Calu3 (cell line): ENCODE measurements at regions of chr2 and their contacts with region 1.

Region 1: DNA sequence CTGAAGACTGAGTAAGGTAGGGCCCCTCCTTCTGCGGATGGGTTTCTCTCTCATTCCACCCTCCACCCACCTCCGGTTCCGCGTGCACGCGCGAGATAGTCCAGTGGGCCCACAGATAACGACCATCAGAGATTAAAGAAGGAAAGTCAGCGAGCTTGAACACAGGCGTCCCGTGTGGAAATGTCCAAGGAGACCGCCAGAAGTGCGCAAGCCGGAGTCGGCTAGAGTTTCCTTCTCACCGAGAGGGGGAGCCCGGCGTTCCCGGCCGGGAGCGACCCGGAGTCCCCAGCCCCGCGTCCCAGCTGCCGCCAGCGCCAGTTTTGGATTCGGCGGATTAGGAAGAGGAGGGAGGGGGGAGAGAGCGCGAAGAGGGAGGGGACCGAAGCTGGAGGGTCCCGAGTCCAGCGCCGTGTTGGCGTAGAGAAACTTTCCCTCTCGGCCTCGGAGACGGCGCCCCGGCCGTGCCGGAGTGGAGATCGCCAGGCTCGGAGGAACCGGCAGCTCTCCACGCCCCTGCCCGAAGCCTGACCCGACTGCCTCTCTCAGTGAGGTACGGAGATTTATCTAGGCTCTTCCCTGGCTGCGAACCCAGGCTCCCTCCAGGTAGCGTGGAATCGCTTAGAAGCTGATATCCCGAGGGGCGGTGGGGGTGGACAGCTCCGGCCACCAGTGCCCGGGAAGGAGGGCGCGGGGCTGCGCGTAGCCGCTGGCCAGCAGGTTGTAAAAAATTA is at the start of gene GULP1:
- DNase-seq: peak; percentile 82
- H3K4me3 Mint-ChIP-seq: peak within 1 kb of the TSS; percentile 95
- H3K27ac Mint-ChIP-seq: peak within 1 kb of the TSS; percentile 96
- H3K4me1 Mint-ChIP-seq: peaks cover 15% of the 10 kb centered on the region
- H3K27me3 Mint-ChIP-seq: no peaks in the 10 kb centered on the region
- CTCF ChIP-seq: peak; percentile 73
- total RNA-seq, gene GULP1: 86.8 and 94.4 TPM in 2 replicates

Region 2: GRCh38 chr2:187554011-187554703 is 737.6 kb before region 1 on chr2 and contains the start of gene TFPI:
- CTCF ChIA-PET with region 1: no interaction called
- intact Hi-C with region 1: loop called (anchors 5 kb)
- DNase-seq: peak; percentile 21
- H3K4me3 Mint-ChIP-seq: peak within 1 kb of the TSS; percentile 82
- H3K27ac Mint-ChIP-seq: peak within 1 kb of the TSS; percentile 92
- H3K4me1 Mint-ChIP-seq: peaks cover 31% of the 10 kb centered on the region
- H3K27me3 Mint-ChIP-seq: no peaks in the 10 kb centered on the region
- CTCF ChIP-seq: no peak
- total RNA-seq, gene TFPI: 125 and 135 TPM in 2 replicates

Region 3: GRCh38 chr2:188369365-188369764 is 77.6 kb after region 1 on chr2:
- CTCF ChIA-PET with region 1: interaction called, 4 read pairs
- intact Hi-C with region 1: loop called (anchors 2 kb)
- DNase-seq: peak; percentile 44
- H3K4me3 Mint-ChIP-seq: no peak overlapping the region
- H3K27ac Mint-ChIP-seq: no peak overlapping the region
- H3K4me1 Mint-ChIP-seq: peaks cover 24% of the 10 kb centered on the region
- H3K27me3 Mint-ChIP-seq: no peaks in the 10 kb centered on the region
- CTCF ChIP-seq: peak; percentile 64